Sciatic nerve (tissue), 2 donors: ENCODE measurements at regions of chr14 and their contacts with region 1.

Region 1: GRCh38 chr14:35998303-35998702 is 172.2 kb downstream of the BRMS1L start:
- DNase-seq: no peak
- ATAC-seq: no peak

Region 2: DNA sequence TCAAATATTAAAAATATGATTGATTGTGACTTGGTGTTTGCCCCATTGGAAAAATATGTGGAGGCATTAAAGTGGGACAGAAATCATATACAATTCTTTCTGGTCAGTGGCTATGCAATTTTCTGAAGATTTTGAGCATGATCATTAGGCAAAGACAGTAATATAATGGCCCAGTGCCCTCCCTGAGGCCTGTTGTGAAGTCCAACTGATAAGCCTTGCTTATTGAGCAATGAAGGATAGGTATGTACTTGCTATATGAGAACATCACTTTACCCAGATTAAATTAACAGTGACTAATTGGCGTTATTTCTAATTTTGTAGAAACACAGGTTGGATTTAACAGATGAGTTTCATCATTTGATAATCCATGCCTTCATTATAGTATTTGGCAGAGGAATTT is 464.6 kb after region 1 on chr14:
- intact Hi-C with region 1: loop called (anchors 5 kb)
- DNase-seq: no peak
- ATAC-seq: no peak